ENCODE measurements at regions of chr1 and their contacts with region 1.

Region 1: GRCh38 chr1:224113918-224114786 is at the start of gene FBXO28:
- DNase-seq: peak; percentile 95 to 99 (median 98)

Region 2: DNA sequence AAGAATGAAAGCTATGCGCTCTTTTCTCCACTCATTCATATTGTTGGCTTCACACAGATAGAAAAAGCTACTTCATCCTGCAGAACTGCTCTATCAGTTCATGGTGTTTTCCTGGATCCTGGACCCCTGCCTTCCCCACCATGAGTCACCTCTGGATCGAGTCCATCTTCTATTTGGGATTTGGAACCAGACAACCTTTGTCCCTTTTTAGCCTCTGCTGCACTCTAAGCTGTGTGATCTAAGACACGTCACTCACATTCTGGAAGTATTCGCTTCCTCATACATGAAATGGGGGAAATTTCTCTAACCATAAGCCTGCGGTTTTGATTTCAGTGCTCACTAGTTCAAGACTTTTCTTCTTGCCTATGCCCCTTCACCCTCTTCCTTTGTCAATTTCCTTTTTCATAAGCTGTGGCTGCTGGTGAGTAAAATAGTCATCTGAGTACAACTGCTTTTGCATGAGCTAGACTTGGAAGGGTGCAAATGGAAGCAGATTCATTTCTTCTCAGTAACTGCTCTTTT is 54.8 kb after region 1 on chr1:
- intact Hi-C with region 1: no loop called
- DNase-seq: no peak

Region 3: DNA sequence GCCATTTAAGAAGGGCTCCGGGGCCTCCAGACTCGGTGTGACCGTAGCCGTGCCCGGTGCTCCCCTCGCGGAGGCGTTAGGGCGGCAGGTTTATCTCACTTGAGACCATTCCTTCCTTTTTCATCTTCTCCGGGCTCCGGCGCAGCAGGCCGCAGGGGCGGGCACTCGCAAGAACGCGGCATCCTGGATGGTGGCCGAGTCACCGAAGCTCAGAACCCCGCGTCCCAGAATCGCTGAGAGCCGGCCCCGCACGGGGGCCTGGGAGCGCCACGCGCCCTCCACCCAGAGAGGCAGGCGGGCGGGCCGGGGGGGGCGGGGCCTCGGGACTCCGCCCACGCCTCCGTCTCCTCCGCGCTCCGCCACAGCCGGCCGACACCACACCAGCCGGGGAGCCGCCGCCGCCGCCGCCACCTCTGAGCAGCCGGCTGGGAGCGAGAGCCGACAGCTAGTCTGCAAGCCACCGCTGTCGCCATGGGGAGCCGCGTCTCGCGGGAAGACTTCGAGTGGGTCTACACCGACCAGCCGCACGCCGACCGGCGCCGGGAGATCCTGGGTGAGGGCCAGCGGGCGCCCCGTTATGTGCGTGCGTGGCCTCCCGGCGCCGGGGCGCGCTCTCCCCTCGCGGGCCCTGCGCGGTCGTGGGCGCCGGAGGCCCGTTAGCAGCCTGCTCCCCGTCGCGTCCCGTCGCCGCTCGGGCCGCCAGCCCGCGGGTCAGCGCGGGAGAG is 68.9 kb after region 1 on chr1 and contains the start of gene DEGS1:
- intact Hi-C with region 1: loop called (anchors 10 kb)
- DNase-seq: peak; percentile 73 to 97 (median 82)

Region 4: DNA sequence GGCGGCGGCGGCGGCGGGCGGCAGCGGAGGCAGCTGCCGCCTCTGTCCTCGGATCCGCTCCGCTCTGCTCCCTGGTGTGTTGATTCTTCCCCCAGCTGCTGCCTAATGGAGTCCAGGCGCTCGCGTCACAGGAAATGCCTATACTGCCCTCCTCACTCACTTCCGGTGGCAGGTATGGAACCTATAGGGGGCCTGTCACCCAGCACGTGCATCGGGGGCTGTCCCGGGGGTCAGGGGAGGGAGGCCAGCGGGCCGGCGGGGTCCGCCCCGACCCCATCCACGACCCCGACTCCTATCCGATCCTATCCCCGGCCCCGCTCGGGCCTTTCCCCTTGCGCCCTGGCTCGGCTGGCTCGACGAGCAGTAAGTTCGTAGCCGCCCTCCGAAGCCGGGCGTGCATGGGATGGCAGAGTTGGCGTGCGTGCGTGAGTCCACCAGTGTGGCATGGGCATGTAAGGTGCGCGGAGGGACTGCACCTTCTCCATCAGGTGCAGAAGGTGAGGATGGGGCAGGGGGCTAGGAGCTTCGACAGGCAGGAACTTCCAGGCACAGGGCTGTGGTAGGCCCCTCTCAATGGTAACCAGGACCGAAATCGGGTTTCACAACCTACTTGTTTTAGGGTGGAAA is 320.7 kb after region 1 on chr1 and contains the start of gene WDR26:
- intact Hi-C with region 1: loop called (anchors 10 kb)
- DNase-seq: peak; percentile 77 to 98 (median 88)

Region 5: GRCh38 chr1:224454397-224455066 is 340.4 kb after region 1 on chr1:
- intact Hi-C with region 1: loop called (anchors 5 kb)
- DNase-seq: no peak